Caki2 (cell line): ENCODE measurements at regions of chr15 and their contacts with region 1.

Region 1: DNA sequence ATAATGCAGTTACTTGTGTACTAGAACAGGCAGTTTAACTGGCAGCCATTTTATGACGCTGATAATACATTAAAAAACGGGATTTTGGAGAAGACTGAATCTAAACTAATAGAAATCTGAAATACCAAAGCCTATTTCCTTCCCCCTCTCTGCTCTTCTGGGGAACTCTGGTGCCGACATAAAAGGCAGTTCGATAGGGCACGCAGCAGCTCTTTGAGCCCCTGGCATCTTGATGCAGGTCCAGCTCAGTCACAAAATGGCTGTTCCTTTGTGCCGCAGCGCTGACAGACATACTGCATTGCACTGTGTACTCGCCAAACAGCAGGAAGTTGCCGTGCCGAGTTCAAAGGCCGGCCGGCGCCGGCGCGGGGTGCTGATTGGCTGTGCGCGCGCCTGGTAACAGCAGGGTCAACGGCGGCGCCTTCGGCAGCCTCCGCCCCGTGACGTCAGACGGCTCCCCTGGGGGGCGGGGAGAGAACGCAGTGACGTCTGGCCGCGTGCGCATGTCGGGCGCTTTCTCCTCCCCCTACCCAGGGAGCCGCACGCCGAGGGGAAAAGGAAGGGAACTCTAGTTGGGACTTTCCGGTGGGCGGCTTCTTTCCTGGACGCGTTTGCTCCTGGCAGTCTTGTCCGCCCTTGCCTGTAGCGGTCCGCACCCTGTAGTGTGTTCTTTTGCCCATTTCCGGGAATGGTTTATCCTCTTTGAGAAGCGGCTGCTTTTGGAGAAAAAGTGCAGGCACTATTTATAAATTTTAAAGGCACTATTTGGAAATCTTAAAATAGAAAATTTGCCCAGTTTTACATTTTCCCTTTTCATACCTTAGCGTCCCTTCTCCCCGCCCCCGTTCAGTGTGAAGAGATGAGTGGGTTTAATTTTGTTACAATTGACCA is 4.1 kb downstream of the CHD2 start:
- DNase-seq: peak; percentile 100

Region 2: DNA sequence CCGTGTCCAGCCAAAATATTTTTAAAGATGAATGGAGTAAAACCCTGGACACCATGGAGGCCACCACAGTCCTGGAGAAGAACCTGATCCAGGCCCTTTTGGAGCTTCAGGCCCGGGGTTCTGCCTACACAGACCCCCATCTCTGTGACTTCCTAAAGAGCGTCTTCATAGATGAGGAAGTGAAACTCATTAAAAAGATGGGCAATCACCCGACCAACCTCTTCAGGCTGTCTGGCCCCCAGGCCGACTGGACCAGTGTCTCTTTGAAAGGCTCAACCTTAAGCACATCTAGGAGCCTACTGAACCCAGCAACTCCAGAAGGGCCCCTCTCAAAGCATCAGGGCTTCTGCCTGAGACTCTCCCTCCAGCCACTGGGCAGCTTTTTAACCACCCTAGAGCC is 140.7 kb before region 1 on chr15:
- in situ Hi-C with region 1: no loop called
- DNase-seq: no peak

Region 3: GRCh38 chr15:92808978-92809879 is 95.0 kb before region 1 on chr15:
- in situ Hi-C with region 1: loop called (anchors 25 kb)
- DNase-seq: peak; percentile 99

Region 4: GRCh38 chr15:92954578-92954977 is 50.4 kb after region 1 on chr15:
- in situ Hi-C with region 1: no loop called
- DNase-seq: no peak